CD8-positive, alpha-beta memory T cell (primary cell): ENCODE measurements at regions of chr7 and their contacts with region 1.

Region 1: DNA sequence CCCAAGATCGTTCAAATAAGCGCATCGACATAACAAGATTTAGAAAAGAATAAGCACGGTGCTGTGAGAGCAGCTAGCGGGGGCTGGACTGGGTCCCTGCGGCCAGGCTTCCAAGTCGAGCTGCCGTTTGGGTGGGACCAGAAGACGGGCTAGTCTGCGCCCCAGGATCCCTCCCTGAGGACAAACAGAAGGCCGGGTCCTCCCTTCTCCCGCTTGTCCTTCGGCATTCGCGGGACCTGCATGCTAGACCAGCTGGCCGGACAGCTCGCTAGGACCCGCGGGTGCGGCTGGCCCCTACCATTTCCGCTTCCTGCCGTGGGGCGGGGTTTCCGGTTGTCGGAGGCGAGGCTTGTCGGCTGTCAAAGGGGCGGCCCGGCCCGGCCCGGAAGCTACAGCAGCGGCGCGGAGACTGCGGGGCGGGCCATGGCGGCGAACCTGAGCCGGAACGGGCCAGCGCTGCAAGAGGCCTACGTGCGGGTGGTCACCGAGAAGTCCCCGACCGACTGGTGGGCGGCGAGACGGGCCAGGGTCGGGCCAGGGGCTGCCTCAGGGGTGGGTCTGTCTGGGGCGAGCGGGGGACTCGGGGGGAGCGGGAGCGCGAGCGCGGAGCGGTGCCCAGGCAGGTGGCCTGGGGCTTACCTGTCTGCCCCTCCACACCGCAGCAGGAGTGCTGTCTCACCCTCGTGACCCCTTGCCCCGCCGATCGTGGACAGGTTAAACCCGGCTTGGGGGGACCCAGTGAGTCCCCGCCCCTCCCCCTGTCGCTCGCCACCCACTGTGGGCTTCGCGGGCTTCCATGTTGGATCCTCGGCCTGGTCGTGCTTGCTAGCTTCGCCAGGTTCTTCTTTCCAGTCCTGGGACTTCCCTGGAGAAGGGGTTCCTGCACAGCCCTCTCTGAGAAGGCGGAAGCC is at the start of gene DBNL:
- DNase-seq: peak; percentile 78 to 91 (median 87)
- H3K4me3 ChIP-seq: peak within 1 kb of the TSS; percentile 90
- H3K4me3 Mint-ChIP-seq: peak within 1 kb of the TSS; percentile 90 to 95 (median 93)
- H3K27ac ChIP-seq: peak within 1 kb of the TSS; percentile 80
- H3K27ac Mint-ChIP-seq: peak within 1 kb of the TSS; percentile 94 to 99 (median 98)
- H3K4me1 ChIP-seq: peaks cover 49% of the 10 kb centered on the region
- H3K4me1 Mint-ChIP-seq: peaks cover 41 to 65% (median 45%) of the 10 kb centered on the region in 3 donors
- H3K27me3 ChIP-seq: no peaks in the 10 kb centered on the region
- H3K27me3 Mint-ChIP-seq: no peaks in the 10 kb centered on the region
- total RNA-seq, gene DBNL: 144 to 154 TPM

Region 2: DNA sequence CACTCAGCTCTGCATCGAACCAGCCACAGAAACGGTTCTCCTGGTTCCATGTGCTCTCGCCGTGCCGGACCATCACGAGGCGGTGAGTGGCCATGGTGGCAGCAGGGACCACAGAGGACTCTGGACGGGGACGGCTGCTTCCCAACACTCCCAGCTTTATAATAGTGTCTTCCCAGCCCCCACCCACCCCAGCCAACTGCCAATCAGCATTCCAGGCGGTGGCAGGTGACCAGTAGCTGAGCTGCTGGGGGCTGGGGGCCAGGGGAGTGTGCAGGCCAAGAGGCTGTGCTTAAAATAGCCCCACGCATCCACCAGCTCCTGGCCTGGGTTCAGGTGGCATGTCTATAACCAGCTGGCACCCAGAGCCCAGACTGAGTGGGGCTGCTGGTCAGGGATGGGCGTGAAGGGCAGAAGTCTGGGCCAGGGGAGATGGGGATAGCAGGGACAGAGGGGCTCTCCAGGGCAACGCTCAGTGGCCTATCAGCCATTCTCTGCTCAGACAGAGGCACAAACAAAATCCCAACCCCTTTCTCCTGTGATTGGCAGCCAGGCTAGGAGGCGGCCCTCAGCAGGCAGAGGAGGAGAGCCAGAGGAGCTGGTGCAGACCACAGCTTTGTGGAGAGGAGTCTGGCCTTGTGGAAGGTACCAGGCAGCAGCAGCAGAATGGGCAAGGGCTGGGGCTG is 21.0 kb after region 1 on chr7 and contains the start of gene PGAM2:
- CTCF ChIA-PET with region 1: no interaction called
- POLR2A ChIA-PET with region 1: interaction called, 11 read pairs
- DNase-seq: peak in 1 of 5 donors; percentile 47
- H3K4me3 ChIP-seq: no peak within 1 kb of the TSS
- H3K4me3 Mint-ChIP-seq: peak within 1 kb of the TSS in 2 of 7 donors; percentile 37 to 47
- H3K27ac ChIP-seq: no peak within 1 kb of the TSS
- H3K27ac Mint-ChIP-seq: peak within 1 kb of the TSS in 3 of 8 donors; percentile 52 to 94 (median 71)
- H3K4me1 ChIP-seq: peaks cover 16% of the 10 kb centered on the region
- H3K4me1 Mint-ChIP-seq: peaks cover 22 to 32% (median 26%) of the 10 kb centered on the region in 3 donors
- H3K27me3 ChIP-seq: no peaks in the 10 kb centered on the region
- H3K27me3 Mint-ChIP-seq: no peaks in the 10 kb centered on the region
- total RNA-seq, gene PGAM2: 0.38 to 0.44 TPM

Region 3: GRCh38 chr7:44240983-44241510 is 196.5 kb after region 1 on chr7:
- CTCF ChIA-PET with region 1: no interaction called
- POLR2A ChIA-PET with region 1: no interaction called
- DNase-seq: peak; percentile 21 to 66 (median 38)
- H3K4me3 ChIP-seq: no peak overlapping the region
- H3K4me3 Mint-ChIP-seq: peak overlapping the region in 4 of 7 donors; percentile 15 to 61 (median 38)
- H3K27ac ChIP-seq: no peak overlapping the region
- H3K27ac Mint-ChIP-seq: peak overlapping the region in 2 of 8 donors; percentile 51 to 57
- H3K4me1 ChIP-seq: peaks cover 5% of the 10 kb centered on the region
- H3K4me1 Mint-ChIP-seq: no peaks in the 10 kb centered on the region
- H3K27me3 ChIP-seq: no peaks in the 10 kb centered on the region
- H3K27me3 Mint-ChIP-seq: no peaks in the 10 kb centered on the region

Region 4: GRCh38 chr7:44325811-44326241 is 281.3 kb after region 1 on chr7:
- CTCF ChIA-PET with region 1: no interaction called
- POLR2A ChIA-PET with region 1: no interaction called
- DNase-seq: no peak
- H3K4me3 ChIP-seq: no peak overlapping the region
- H3K4me3 Mint-ChIP-seq: peak overlapping the region in 6 of 7 donors; percentile 66 to 78 (median 78)
- H3K27ac ChIP-seq: no peak overlapping the region
- H3K27ac Mint-ChIP-seq: no peak overlapping the region
- H3K4me1 ChIP-seq: no peaks in the 10 kb centered on the region
- H3K4me1 Mint-ChIP-seq: peaks cover 5 to 14% (median 6%) of the 10 kb centered on the region in 3 donors
- H3K27me3 ChIP-seq: peaks cover 3% of the 10 kb centered on the region
- H3K27me3 Mint-ChIP-seq: peaks cover 36 to 53% of the 10 kb centered on the region in 2 donors